H1 (cell line): ENCODE measurements at regions of chr5 and their contacts with region 1.

Region 1: DNA sequence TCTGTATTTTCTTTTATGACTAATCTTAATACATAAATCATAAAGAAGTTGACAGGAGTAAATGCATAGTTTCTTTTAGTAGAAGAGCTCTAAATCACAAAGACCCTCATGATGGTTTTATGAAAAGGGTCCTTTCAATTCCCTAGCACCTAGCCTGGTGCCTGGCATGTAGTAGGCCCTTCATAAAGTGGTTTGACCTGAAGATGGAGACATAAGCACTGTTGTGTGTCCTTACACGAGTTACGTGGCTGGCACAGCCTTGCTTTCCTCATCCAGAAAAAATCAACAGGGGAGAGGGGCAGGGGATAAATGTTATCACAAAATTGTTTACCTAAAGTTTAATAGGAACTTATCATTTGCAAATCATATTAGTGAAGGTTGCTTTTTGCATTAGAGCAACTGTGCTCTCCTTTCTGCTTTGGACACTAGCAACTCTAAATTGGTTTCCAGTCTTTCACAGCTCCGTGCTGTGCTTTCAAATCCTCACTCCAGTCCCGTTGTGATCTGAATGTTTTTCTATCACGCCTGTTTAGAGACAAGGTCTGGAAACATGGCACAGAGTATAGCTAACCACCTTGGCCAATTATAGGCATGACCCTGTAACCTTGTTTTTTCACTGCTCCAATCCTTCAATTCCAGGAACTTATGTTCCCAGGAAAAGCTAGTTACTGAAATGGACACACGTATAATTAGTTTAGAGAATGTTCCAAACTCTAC is 55.7 kb downstream of the ARL15 start:
- DNase-seq: no peak
- H3K4me3 ChIP-seq: no peak overlapping the region
- H3K27ac ChIP-seq: no peak overlapping the region
- H3K4me1 ChIP-seq: no peaks in the 10 kb centered on the region; a peak in 1 of 7 replicates
- H3K27me3 ChIP-seq: no peaks in the 10 kb centered on the region
- CTCF ChIP-seq: peak in 2 of 3 experiments; percentile 36 to 48; a peak in 2 of 4 replicates
- EP300 ChIP-seq: no peak
- POLR2A ChIP-seq: no peak
- RAD21 ChIP-seq: peak; percentile 66 to 71

Region 2: GRCh38 chr5:54383225-54383901 is 128.7 kb after region 1 on chr5:
- CTCF ChIA-PET with region 1: no interaction called
- POLR2A ChIA-PET with region 1: no interaction called
- DNase-seq: no peak
- H3K4me3 ChIP-seq: no peak overlapping the region
- H3K27ac ChIP-seq: no peak overlapping the region
- H3K4me1 ChIP-seq: no peaks in the 10 kb centered on the region
- H3K27me3 ChIP-seq: no peaks in the 10 kb centered on the region
- CTCF ChIP-seq: no peak
- EP300 ChIP-seq: no peak
- POLR2A ChIP-seq: no peak
- RAD21 ChIP-seq: no peak

Region 3: DNA sequence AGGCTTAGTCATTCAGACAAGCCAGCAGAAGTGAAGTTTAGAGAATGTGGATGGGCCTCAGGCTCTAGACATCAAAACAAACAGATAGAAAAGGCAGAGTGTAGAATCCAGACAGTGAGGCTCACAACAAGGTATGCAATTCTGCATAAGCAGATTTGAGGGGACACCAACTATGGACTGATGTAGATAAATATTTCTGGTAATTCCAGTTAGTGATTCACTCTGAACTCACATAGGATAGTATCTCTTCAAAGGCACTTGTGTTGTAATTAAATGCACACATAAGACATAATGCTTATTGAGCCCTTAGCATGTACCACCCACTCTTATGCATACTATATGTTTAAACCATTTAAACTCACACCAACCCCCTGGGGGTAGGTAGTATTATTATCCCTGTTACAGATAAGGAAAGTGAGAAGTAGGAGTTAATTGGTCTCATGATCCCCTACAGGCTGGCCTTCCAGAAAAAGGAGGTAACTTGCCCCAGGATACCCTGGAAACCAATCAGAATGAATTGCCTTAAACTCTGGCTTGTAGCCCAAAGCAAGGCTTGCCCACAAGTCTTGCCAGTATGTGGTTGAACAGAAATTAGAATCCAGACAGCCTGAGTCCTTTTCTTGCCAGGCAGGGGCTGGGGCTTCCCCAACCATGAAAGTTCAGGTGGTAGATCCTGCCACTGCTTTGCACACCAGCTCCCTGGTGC is 161.4 kb after region 1 on chr5:
- CTCF ChIA-PET with region 1: interaction called, 13 read pairs
- POLR2A ChIA-PET with region 1: no interaction called
- DNase-seq: no peak
- H3K4me3 ChIP-seq: no peak overlapping the region
- H3K27ac ChIP-seq: no peak overlapping the region
- H3K4me1 ChIP-seq: no peaks in the 10 kb centered on the region
- H3K27me3 ChIP-seq: no peaks in the 10 kb centered on the region
- CTCF ChIP-seq: no peak
- EP300 ChIP-seq: no peak
- POLR2A ChIP-seq: no peak
- RAD21 ChIP-seq: no peak

Region 4: GRCh38 chr5:54425258-54425657 is 170.6 kb after region 1 on chr5:
- CTCF ChIA-PET with region 1: interaction called, 10 read pairs
- POLR2A ChIA-PET with region 1: no interaction called
- DNase-seq: no peak
- H3K4me3 ChIP-seq: no peak overlapping the region
- H3K27ac ChIP-seq: no peak overlapping the region
- H3K4me1 ChIP-seq: no peaks in the 10 kb centered on the region
- H3K27me3 ChIP-seq: no peaks in the 10 kb centered on the region
- CTCF ChIP-seq: no peak
- EP300 ChIP-seq: no peak
- POLR2A ChIP-seq: no peak
- RAD21 ChIP-seq: no peak